ENCODE measurements at regions of chr6 and their contacts with region 1.

Region 1: DNA sequence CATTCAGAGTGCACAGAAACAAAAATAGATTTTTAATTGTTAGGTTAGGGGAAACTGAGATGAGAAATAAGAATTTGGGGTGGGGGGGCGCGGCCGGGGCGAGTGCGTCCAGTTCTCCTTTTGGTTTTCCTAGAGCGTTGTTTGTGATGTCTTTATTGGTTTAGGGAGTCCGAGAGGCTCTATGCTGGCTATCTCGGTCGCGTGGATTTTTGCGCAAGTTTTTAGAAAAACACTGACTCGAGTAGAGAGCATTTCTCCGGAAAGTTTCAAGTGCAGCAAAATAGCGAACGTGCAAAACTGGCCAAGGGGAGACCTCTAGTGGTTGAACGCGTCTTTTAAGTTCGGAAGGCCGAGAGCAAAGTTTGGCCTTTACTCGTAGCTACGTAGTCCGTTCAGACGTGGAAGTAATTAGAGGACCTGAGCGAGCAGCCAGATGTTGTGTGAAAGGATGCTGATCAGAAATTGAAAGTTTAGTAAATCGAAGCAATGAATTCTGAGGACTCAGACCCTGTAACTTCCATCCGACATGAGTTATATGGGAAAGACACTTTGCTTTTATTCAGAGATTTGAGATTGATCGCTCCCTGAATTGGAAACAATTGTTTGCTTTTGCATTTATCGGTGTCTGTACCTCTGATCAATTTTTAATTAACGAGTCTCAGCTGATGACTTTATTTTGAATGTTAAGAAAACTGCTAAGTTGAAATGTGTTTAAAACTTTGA is 2.7 kb downstream of the L3MBTL3 start:
- H3K4me3 Mint-ChIP-seq: peak overlapping the region; percentile 78
- H3K27ac Mint-ChIP-seq: peak overlapping the region; percentile 79
- H3K4me1 Mint-ChIP-seq: peaks cover 10% of the 10 kb centered on the region
- H3K27me3 Mint-ChIP-seq: no peaks in the 10 kb centered on the region

Region 2: DNA sequence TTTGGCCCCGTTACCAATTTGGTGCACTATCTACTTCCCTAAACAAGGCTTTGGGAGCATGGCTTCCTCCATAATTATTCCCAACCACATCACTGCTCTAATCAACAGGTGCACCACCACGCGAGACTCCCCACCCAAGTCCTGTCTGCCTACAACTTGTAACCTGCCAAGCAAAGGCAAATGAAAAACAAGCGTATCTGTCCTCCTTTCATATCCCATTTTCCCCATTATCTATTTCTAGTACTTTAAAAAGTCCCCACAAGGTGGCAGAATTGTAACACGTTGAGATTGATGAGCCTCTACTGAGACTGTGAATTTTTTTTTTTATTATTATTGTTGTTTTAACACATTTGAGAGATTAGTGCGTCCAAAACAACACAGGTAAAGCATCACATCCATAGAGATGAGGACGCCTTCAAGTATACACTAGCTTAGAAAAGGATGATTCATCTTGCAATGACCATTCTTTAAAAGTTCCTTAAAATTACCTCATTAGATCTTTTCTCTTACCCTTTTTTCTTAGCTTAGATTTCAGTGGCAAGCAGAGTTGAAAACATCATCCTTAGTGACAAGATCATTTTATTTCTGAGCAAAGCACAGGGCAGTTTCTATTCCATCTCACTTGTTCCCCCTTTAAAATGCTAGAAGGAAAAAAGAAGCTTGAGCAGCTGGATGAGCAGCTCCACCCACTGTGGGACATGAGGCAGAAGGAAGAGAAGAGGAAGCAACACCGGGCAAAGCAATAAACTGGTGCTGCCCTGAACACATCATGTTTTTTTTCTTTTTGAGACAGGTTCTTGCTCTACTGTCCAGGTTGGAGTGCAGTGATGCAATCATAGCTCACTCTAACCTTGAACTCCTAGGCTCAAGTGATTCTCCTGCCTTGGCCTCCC is 521.9 kb before region 1 on chr6:
- intact Hi-C with region 1: loop called (anchors 5 kb)
- H3K4me3 Mint-ChIP-seq: peak overlapping the region; percentile 53
- H3K27ac Mint-ChIP-seq: peak overlapping the region; percentile 70
- H3K4me1 Mint-ChIP-seq: peaks cover 30% of the 10 kb centered on the region
- H3K27me3 Mint-ChIP-seq: no peaks in the 10 kb centered on the region

Region 3: DNA sequence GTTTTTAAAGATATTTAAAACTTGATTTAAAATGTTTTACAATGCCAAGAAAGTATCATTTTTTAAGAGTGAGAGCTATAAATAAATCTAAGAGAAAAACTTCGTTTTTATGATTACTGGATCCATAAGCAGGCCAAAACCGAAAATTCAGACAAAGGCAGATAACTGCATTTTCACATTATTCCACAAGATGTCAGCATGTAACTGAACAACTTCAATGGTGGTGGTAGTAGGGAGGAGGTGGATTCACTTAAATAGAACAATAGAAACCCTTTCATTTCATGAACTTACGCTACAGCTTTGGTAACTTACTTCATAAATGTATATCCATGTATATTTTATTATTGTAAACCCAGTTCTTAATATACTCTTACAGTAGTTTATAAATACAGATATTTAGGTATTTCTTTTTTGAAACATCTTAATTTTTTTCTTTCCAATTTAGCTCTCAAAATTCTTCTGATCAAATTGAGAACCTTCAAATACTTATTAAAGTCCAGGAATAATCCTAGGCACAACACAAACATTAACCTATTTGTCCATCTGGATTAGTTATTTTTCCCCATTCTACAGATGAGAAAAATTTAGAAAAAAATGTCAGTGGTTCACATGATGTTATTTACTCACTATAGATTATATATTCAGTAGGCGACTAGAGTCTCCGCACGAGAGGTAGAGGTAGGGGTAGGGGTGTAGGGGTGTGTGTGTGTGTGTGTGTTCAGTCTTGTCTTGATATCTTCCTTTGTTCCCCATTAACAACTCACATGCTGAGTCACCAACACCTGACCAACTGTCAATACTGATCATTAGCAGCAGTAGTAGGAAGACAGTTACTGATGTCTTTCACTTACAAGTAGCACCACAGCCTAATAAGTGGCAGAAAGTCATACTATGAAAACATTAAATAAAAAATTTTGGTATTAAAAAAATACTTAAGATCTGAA is 422.6 kb before region 1 on chr6:
- intact Hi-C with region 1: loop called (anchors 10 kb)
- H3K4me3 Mint-ChIP-seq: no peak overlapping the region
- H3K27ac Mint-ChIP-seq: no peak overlapping the region
- H3K4me1 Mint-ChIP-seq: peaks cover 11% of the 10 kb centered on the region
- H3K27me3 Mint-ChIP-seq: no peaks in the 10 kb centered on the region

Region 4: GRCh38 chr6:129766959-129767728 is 253.9 kb before region 1 on chr6:
- intact Hi-C with region 1: loop called (anchors 10 kb)
- H3K4me3 Mint-ChIP-seq: peak overlapping the region; percentile 71
- H3K27ac Mint-ChIP-seq: no peak overlapping the region
- H3K4me1 Mint-ChIP-seq: peaks cover 17% of the 10 kb centered on the region
- H3K27me3 Mint-ChIP-seq: peaks cover 70% of the 10 kb centered on the region

Region 5: DNA sequence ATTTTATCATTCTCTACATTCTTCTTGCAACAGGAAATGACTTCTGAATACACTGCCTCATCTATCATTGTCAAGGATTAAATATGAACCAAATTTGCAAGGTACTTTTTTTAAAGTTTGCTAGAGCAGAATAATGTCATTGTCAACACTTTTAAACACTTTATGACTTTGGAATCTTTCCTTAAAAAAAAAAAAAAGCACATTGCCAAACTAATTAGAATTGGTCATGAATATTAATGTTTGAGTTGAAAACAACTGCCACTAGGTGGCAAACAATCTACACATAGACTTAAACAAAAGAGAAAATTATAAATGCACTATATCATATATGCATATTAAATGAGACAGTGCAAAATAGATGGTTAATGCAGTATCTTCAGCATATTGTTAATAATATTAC is 127.4 kb before region 1 on chr6:
- intact Hi-C with region 1: loop called (anchors 2 kb)
- H3K4me3 Mint-ChIP-seq: no peak overlapping the region
- H3K27ac Mint-ChIP-seq: no peak overlapping the region
- H3K4me1 Mint-ChIP-seq: peaks cover 35% of the 10 kb centered on the region
- H3K27me3 Mint-ChIP-seq: peaks cover 2% of the 10 kb centered on the region

Region 6: DNA sequence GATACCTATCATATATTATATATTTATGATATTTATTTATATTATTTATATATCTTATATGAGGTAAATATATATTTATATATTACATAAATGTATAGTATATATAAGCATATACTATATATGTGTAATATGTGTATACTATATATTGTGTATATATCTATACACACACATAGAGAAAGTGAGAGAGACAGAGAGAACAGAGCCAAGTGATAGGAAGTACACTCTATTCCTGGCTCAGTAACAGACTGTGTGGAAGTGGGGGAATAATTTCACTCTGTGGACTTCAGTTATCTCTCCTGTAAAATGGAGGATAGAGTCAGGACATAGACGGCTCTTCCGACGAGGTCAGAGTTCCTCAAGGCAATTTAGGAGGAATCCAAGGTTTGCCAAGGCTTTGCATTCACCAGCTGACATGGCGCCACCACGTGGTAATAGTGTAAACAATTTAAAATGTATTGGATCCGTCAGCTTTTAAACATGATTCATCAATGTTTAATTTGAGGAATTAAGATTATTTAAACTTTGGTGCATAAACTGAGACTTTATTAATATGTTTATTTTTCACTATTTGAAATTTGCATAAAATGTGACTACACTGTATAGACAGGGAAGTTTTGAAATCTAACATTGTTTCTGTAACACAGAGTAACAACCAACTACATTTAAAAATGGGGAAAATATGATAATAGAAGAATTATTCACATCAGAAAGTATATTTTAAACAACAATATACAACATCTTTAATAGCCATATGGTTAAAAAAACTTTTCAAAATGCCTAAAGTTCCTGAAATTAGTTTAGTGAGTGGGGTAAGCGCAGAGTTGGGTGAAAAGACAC is 84.5 kb before region 1 on chr6:
- intact Hi-C with region 1: loop called (anchors 5 kb)
- H3K4me3 Mint-ChIP-seq: no peak overlapping the region
- H3K27ac Mint-ChIP-seq: no peak overlapping the region
- H3K4me1 Mint-ChIP-seq: no peaks in the 10 kb centered on the region
- H3K27me3 Mint-ChIP-seq: peaks cover 13% of the 10 kb centered on the region